ENCODE measurements at regions of chr17 and their contacts with region 1.

Region 1: GRCh38 chr17:52536489-52536888 is 378.0 kb upstream of the CA10 start:
- DNase-seq: peak; percentile 17 to 65 (median 25)
- ATAC-seq: peak in 3 of 4 donors; percentile 61 to 77 (median 74)
- H3K4me3 ChIP-seq: no peak overlapping the region
- H3K27ac ChIP-seq: no peak overlapping the region
- H3K4me1 ChIP-seq: peaks cover 0 to 5% (median 0%) of the 10 kb centered on the region in 12 donors
- H3K27me3 ChIP-seq: no peaks in the 10 kb centered on the region
- CTCF ChIP-seq: no peak
- POLR2A ChIP-seq: no peak

Region 2: GRCh38 chr17:52465407-52465806 is 71.1 kb before region 1 on chr17:
- intact Hi-C with region 1: no loop called
- DNase-seq: no peak
- ATAC-seq: no peak
- H3K4me3 ChIP-seq: no peak overlapping the region
- H3K27ac ChIP-seq: no peak overlapping the region
- H3K4me1 ChIP-seq: no peaks in the 10 kb centered on the region
- H3K27me3 ChIP-seq: no peaks in the 10 kb centered on the region
- CTCF ChIP-seq: no peak
- POLR2A ChIP-seq: no peak

Region 3: GRCh38 chr17:52594516-52594915 is 58.0 kb after region 1 on chr17:
- intact Hi-C with region 1: loop called in 1 of 10 experiments (anchors 5 kb)
- DNase-seq: no peak
- ATAC-seq: no peak
- H3K4me3 ChIP-seq: no peak overlapping the region
- H3K27ac ChIP-seq: no peak overlapping the region
- H3K4me1 ChIP-seq: no peaks in the 10 kb centered on the region
- H3K27me3 ChIP-seq: no peaks in the 10 kb centered on the region
- CTCF ChIP-seq: no peak
- POLR2A ChIP-seq: no peak

Region 4: GRCh38 chr17:52677991-52678620 is 141.6 kb after region 1 on chr17:
- intact Hi-C with region 1: no loop called
- DNase-seq: no peak
- ATAC-seq: no peak
- H3K4me3 ChIP-seq: no peak overlapping the region
- H3K27ac ChIP-seq: no peak overlapping the region
- H3K4me1 ChIP-seq: no peaks in the 10 kb centered on the region
- H3K27me3 ChIP-seq: no peaks in the 10 kb centered on the region
- CTCF ChIP-seq: no peak
- POLR2A ChIP-seq: no peak